GM10248 (cell line): ENCODE measurements at regions of chr2 and their contacts with region 1.

Region 1: DNA sequence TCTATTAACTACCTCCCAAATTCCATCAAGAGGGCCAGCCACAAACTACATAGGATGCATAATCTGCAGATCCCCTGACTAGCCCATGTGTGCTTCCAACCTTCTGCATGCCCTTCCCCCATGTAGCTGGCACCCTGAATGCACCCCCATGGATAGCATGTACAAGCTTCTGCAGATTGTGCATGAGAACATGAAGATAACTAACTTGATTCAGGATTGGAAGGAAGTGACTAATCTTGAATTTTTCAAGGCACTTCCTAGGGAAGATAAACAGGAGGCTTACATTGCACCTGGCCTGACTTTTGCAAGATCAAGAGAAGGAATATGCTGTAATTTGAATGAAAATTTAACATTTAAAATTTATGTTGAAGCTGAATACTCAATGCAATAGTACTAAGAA is 66.7 kb downstream of the CDC42EP3 start:
- DNase-seq: no peak
- CTCF ChIP-seq: no peak

Region 2: GRCh38 chr2:37617119-37617892 is 12.6 kb after region 1 on chr2:
- CTCF ChIA-PET with region 1: interaction called, 31 read pairs
- POLR2A ChIA-PET with region 1: no interaction called
- DNase-seq: no peak
- CTCF ChIP-seq: no peak